ENCODE measurements at regions of chr9 and their contacts with region 1.

Region 1: DNA sequence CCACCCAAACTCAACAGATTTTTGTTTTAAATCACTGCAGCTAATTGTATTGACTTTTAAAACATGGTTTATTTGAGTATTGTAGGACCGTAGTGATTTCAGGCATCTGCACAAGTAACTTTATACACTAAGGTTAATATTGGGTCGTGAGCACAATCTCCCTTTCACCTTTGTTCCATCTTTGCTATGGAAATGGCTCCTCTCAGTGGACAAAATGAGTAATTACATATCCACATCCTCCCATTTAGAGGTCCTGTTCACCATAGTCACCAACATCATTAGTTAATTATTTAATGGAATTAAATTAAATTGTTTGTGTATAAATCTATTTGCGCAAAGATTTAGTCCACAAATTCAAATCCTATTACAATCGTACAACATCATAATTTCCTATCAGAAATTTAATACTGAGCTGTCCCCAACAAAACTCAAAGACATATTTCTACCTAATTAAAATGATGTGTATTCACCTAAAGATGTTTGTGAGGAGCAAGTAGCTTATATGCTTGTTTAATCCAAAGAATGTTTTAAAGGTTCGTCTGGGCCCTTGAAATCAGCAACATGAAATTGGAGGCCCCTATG is 173.0 kb upstream of the DAPK1 start:
- DNase-seq: no peak
- ATAC-seq: peak; percentile 78

Region 2: DNA sequence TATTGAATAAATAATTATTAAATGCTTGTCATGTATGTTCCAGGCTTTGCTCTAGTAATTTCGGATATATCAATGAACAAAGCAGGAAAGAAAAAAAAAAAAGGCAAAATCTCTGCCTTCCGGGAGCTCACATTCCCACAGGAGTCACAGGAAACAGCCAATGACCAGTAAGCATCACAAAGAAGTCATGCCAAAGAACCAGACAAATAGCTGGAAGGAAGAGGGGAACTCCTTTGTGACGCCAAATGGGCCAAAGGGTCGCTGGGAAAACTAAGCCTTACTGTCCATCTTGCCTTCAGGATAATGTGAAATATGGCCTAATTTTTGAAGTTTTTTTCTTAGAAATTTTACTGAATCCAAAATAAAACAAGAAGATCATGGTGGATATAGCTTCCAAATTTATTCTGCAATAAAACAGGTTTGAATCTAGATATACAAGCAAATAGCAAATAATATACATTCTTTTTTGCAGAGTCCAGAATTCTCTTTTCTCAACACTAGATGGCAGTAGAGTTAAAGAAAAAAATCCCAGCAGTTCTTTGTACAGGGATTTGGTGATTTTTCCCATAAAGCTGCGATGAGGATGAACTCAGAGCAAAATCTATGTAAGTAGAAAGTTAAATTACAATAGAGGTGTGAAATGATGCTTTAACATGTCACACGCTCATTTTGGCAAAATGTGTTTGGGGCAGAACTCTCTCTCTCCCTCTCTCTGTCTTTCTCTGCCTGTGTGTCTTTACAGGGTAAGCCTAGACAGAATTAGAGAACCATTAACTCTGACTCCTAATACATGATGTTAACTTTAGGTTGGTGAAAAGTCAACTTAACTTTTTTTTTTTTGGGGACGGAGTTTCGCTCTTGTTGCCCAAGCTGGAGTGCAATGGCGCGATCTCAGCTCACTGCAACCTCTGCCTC is 910.5 kb before region 1 on chr9:
- intact Hi-C with region 1: loop called (anchors 5 kb)
- DNase-seq: no peak
- ATAC-seq: no peak

Region 3: GRCh38 chr9:86434039-86434726 is 890.5 kb before region 1 on chr9:
- intact Hi-C with region 1: loop called (anchors 5 kb)
- DNase-seq: no peak
- ATAC-seq: peak; percentile 72

Region 4: DNA sequence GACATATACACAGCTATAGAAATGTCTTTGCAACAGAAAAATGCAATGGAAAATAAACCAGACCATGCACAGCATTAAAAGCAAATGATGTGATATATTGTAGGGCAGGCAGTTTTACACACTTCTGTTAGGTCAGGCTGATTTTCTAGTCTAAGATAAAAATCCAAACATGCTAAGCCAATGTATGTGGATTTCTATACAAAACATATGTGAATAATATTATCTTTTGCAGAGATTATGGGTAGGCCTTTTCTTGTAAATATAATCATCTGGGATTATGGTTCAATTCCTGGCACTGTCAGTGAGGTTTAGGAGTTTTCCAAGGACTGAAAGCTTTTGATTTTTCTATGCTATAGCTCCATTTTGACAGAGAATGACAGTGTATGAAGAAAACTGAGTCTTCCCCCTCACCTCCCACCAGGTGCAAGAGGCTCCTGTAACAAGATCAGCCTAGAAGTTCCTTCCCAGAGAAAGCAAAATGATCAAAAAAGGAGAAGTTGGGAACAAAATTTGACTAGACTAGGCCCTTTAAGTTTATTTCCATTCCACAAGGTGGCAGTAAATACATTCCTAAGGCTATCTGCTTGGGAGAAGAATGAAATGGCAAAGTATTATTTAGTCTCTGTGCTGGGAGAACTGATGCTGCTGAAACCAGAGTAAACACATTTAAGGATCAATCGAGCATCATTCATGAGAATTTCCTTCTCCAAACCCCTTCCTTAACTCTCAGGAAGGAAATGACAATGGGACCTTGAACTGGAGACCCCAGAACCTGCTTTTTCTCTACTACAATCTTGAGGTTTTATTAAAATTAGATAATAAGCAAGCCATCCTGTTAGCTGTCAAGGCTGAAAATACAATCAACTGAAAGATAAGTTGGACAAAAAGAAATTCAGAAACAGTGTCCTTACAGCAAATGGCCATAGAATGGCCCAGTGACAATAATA is 837.5 kb before region 1 on chr9:
- intact Hi-C with region 1: loop called (anchors 2 kb)
- DNase-seq: no peak
- ATAC-seq: peak; percentile 79

Measured in Right ventricle myocardium inferior (tissue), 1 donor.